CD4-positive, alpha-beta T cell (primary cell): ENCODE measurements at regions of chr2 and their contacts with region 1.

Region 1: GRCh38 chr2:218269899-218270720 is at the starts of genes AAMP and PNKD:
- DNase-seq: peak; percentile 100
- ATAC-seq: peak; percentile 90
- H3K4me3 ChIP-seq: peak within 1 kb of the TSS; percentile 93
- H3K4me3 Mint-ChIP-seq: peak within 1 kb of the TSS; percentile 88
- H3K27ac ChIP-seq: peak within 1 kb of the TSS; percentile 69 to 80
- H3K27ac Mint-ChIP-seq: peak within 1 kb of the TSS; percentile 78
- H3K4me1 ChIP-seq: peaks cover 65% of the 10 kb centered on the region
- H3K4me1 Mint-ChIP-seq: peaks cover 54% of the 10 kb centered on the region
- H3K27me3 ChIP-seq: no peaks in the 10 kb centered on the region
- H3K27me3 Mint-ChIP-seq: no peaks in the 10 kb centered on the region
- CTCF ChIP-seq: peak; percentile 22
- total RNA-seq, gene AAMP: 40.2 to 42.5 TPM
- total RNA-seq, gene PNKD: 9.2 to 10.6 TPM

Region 2: DNA sequence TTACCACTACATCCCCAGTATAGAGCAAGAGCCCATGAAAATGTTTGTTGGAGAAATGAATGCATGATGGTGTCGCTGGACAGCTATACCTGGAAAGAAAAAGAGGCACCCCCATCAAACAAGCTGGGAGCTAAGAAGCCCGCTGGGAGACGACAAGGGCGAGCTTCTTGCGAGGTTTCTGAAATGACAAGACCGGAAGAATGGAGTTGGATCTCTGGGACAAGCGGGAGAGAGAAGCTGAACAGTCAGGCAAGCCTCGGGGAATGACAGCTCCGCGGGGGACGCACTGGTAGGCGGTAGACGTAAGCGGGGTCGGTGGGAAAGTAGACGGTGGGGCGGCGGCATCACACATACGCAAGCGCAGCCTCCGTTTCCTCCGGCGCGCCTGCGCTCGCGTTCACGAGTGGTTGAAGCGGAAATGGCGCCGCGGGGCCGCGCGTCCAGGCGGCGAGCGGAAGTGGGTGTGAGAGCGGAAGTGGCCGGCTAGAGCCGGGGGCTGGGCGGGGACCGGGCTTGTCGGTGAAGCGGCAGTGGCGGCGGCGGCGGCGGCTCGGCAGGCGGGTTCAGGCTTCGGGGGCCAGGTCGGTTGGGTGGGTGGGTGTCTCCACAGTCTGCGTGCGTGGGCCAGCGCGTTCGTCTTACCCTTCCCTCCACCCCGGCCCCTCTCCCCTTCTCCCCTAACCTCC is 53.3 kb before region 1 on chr2 and contains the start of gene ARPC2:
- CTCF ChIA-PET with region 1: no interaction called
- POLR2A ChIA-PET with region 1: interaction called, 42 read pairs
- intact Hi-C with region 1: loop called (anchors 1 to 2 kb)
- DNase-seq: peak; percentile 90 to 98 (median 93)
- ATAC-seq: peak; percentile 73
- H3K4me3 ChIP-seq: peak within 1 kb of the TSS; percentile 80
- H3K4me3 Mint-ChIP-seq: peak within 1 kb of the TSS; percentile 95
- H3K27ac ChIP-seq: peak within 1 kb of the TSS; percentile 96 to 99
- H3K27ac Mint-ChIP-seq: peak within 1 kb of the TSS; percentile 96
- H3K4me1 ChIP-seq: peaks cover 36% of the 10 kb centered on the region
- H3K4me1 Mint-ChIP-seq: peaks cover 45% of the 10 kb centered on the region
- H3K27me3 ChIP-seq: no peaks in the 10 kb centered on the region
- H3K27me3 Mint-ChIP-seq: no peaks in the 10 kb centered on the region
- CTCF ChIP-seq: no peak
- total RNA-seq, gene ARPC2: 448 to 452 TPM

Region 3: GRCh38 chr2:218229239-218229638 is 40.9 kb before region 1 on chr2:
- CTCF ChIA-PET with region 1: interaction called, 10 read pairs
- POLR2A ChIA-PET with region 1: interaction called, 18 read pairs
- intact Hi-C with region 1: no loop called
- DNase-seq: peak in 10 of 14 experiments; percentile 13 to 85 (median 36)
- ATAC-seq: peak; percentile 82
- H3K4me3 ChIP-seq: no peak overlapping the region
- H3K4me3 Mint-ChIP-seq: peak overlapping the region; percentile 71
- H3K27ac ChIP-seq: peak overlapping the region; percentile 51 to 60
- H3K27ac Mint-ChIP-seq: peak overlapping the region; percentile 91
- H3K4me1 ChIP-seq: peaks cover 70% of the 10 kb centered on the region
- H3K4me1 Mint-ChIP-seq: peaks cover 78% of the 10 kb centered on the region
- H3K27me3 ChIP-seq: no peaks in the 10 kb centered on the region
- H3K27me3 Mint-ChIP-seq: no peaks in the 10 kb centered on the region
- CTCF ChIP-seq: no peak

Region 4: GRCh38 chr2:218286570-218287459 is 16.7 kb after region 1 on chr2:
- CTCF ChIA-PET with region 1: interaction called, 68 read pairs
- POLR2A ChIA-PET with region 1: interaction called, 221 read pairs
- intact Hi-C with region 1: loop called (anchors 1 kb)
- DNase-seq: peak; percentile 49 to 96 (median 69)
- ATAC-seq: peak; percentile 58
- H3K4me3 ChIP-seq: peak overlapping the region; percentile 56
- H3K4me3 Mint-ChIP-seq: peak overlapping the region; percentile 91
- H3K27ac ChIP-seq: peak overlapping the region; percentile 95 to 98
- H3K27ac Mint-ChIP-seq: peak overlapping the region; percentile 99
- H3K4me1 ChIP-seq: peaks cover 100% of the 10 kb centered on the region
- H3K4me1 Mint-ChIP-seq: peaks cover 94% of the 10 kb centered on the region
- H3K27me3 ChIP-seq: no peaks in the 10 kb centered on the region
- H3K27me3 Mint-ChIP-seq: no peaks in the 10 kb centered on the region
- CTCF ChIP-seq: no peak

Region 5: DNA sequence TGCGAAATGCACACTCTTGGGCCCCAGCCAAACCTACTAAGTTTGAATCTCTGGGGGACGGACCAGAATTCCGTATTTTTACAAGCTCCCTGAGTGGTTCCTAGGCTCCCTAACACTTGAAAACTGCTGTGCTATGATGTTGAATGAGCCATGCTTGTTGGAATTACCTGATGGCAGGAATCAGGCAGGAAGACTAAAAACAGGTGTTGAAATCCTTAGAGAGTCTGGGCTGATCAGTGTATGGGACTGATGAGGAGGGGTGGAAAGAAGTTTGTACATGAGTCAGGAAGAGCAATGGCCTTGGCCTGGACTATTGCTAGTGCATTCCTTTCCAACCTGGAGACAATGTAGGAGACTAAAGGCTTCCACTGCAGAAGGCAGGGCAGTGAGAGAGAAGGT is 47.1 kb after region 1 on chr2:
- CTCF ChIA-PET with region 1: no interaction called
- POLR2A ChIA-PET with region 1: interaction called, 16 read pairs
- intact Hi-C with region 1: no loop called
- DNase-seq: no peak
- ATAC-seq: no peak
- H3K4me3 ChIP-seq: no peak overlapping the region
- H3K4me3 Mint-ChIP-seq: peak overlapping the region; percentile 40
- H3K27ac ChIP-seq: peak overlapping the region; percentile 60 to 67
- H3K27ac Mint-ChIP-seq: peak overlapping the region; percentile 97
- H3K4me1 ChIP-seq: peaks cover 47% of the 10 kb centered on the region
- H3K4me1 Mint-ChIP-seq: peaks cover 56% of the 10 kb centered on the region
- H3K27me3 ChIP-seq: no peaks in the 10 kb centered on the region
- H3K27me3 Mint-ChIP-seq: no peaks in the 10 kb centered on the region
- CTCF ChIP-seq: no peak

Region 6: DNA sequence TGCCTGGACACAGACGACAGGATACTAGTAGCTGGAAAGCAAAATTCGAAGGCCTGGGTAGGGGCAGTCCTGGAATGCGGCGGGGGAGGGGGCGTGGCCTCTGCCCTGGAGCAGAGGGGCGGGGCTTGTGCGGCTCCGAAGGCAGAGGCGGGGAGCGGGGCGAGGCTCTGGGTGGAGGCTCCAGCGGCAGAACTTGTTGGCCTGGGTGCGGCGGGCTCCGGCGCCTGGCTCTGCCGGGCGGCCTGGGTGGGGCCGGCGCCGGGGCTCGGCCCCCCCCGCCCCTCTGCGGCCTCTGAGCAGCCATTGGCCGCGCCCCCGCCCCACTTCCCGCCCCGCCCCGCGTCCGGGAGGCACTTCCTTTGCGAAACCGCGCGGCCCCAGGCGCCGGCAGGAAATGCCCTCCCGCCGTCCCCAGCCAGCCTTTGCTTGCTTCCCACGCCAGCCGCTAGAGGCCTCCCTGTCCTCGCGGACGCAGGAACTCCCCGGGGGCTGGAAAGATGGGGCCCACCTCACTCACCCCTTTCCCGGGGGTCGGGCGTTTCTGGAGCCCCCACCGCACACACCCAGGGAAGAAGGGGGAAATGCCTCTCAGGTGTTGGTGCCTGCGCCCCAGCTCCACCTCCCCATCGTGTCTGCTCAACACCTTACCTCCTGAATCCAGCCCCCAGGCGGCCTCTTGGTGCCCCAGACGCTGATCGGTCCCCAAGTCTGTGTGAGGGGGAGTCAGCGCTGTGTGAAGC is 136.3 kb after region 1 on chr2:
- CTCF ChIA-PET with region 1: no interaction called
- POLR2A ChIA-PET with region 1: interaction called, 12 read pairs
- intact Hi-C with region 1: no loop called
- DNase-seq: peak; percentile 73 to 97 (median 94)
- ATAC-seq: peak; percentile 69
- H3K4me3 ChIP-seq: peak overlapping the region; percentile 59
- H3K4me3 Mint-ChIP-seq: peak overlapping the region; percentile 90
- H3K27ac ChIP-seq: peak overlapping the region; percentile 61 to 78
- H3K27ac Mint-ChIP-seq: peak overlapping the region; percentile 88
- H3K4me1 ChIP-seq: peaks cover 68% of the 10 kb centered on the region
- H3K4me1 Mint-ChIP-seq: peaks cover 57% of the 10 kb centered on the region
- H3K27me3 ChIP-seq: no peaks in the 10 kb centered on the region
- H3K27me3 Mint-ChIP-seq: no peaks in the 10 kb centered on the region
- CTCF ChIP-seq: peak; percentile 67

Region 7: DNA sequence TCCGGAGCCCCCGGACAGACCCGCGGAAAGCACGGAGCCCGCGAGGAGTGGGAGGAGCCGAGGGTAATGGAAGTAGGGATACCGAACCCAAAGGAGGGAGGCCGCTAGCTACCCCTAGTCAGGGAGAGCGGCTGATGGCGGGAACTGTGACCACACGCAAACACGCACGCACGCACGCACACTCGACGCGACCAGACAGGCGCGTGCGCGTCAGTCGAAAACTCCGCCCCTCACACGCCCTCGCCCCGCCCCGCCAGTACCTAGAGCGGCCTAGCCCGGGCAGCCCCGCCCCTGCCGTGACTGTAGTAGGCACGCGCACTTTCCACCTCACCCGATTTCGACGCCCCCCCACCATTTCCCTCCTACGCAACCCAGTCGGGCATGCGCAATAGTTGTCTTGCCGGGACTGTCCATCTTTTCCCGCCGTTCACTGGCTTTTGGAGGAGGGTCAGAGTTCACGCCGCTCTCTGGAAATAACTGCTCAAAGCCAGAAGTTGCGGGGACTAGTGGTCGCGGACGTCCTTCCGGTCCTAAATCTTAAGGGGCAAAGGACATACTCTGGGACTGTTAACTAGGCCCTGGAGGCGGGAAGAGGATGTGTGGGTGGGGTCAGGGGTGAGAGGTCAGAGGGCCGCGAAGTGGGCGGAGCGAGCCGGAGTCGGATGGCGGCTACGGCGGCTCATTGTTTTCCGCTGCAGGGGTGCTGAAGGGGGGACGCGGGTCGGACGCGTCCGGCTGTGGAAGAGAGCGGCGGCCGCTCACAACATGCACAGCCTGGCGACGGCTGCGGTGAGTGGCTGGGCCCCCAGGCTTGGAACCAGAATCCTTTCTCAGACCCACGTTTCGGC is 298.3 kb after region 1 on chr2 and contains the starts of genes CNOT9 and USP37:
- CTCF ChIA-PET with region 1: interaction called, 3 read pairs
- POLR2A ChIA-PET with region 1: interaction called, 3 read pairs
- intact Hi-C with region 1: loop called (anchors 1 kb)
- DNase-seq: peak; percentile 99 to 100 (median 100)
- ATAC-seq: peak; percentile 85
- H3K4me3 ChIP-seq: peak within 1 kb of the TSS; percentile 77
- H3K4me3 Mint-ChIP-seq: peak within 1 kb of the TSS; percentile 96
- H3K27ac ChIP-seq: peak within 1 kb of the TSS; percentile 98 to 99
- H3K27ac Mint-ChIP-seq: peak within 1 kb of the TSS; percentile 97
- H3K4me1 ChIP-seq: peaks cover 32% of the 10 kb centered on the region
- H3K4me1 Mint-ChIP-seq: peaks cover 77% of the 10 kb centered on the region
- H3K27me3 ChIP-seq: no peaks in the 10 kb centered on the region
- H3K27me3 Mint-ChIP-seq: no peaks in the 10 kb centered on the region
- CTCF ChIP-seq: no peak
- total RNA-seq, gene CNOT9: 62.8 to 66.8 TPM
- total RNA-seq, gene USP37: 20.2 to 24.4 TPM